ENCODE measurements at regions of chr16 and their contacts with region 1.

Region 1: GRCh38 chr16:29738514-29738913 is 7.3 kb downstream of the C16orf54 start:
- DNase-seq: peak in 7 of 9 donors; percentile 66 to 86 (median 82)
- ATAC-seq: peak; percentile 90
- H3K4me3 ChIP-seq: peak overlapping the region; percentile 18
- H3K4me3 Mint-ChIP-seq: peak overlapping the region; percentile 50 to 96 (median 64)
- H3K27ac ChIP-seq: peak overlapping the region; percentile 80
- H3K27ac Mint-ChIP-seq: peak overlapping the region; percentile 82 to 99 (median 91)
- H3K4me1 ChIP-seq: peaks cover 69 to 70% of the 10 kb centered on the region in 2 donors
- H3K4me1 Mint-ChIP-seq: peaks cover 63 to 91% (median 84%) of the 10 kb centered on the region in 7 donors
- H3K27me3 ChIP-seq: no peaks in the 10 kb centered on the region
- H3K27me3 Mint-ChIP-seq: no peaks in the 10 kb centered on the region

Region 2: DNA sequence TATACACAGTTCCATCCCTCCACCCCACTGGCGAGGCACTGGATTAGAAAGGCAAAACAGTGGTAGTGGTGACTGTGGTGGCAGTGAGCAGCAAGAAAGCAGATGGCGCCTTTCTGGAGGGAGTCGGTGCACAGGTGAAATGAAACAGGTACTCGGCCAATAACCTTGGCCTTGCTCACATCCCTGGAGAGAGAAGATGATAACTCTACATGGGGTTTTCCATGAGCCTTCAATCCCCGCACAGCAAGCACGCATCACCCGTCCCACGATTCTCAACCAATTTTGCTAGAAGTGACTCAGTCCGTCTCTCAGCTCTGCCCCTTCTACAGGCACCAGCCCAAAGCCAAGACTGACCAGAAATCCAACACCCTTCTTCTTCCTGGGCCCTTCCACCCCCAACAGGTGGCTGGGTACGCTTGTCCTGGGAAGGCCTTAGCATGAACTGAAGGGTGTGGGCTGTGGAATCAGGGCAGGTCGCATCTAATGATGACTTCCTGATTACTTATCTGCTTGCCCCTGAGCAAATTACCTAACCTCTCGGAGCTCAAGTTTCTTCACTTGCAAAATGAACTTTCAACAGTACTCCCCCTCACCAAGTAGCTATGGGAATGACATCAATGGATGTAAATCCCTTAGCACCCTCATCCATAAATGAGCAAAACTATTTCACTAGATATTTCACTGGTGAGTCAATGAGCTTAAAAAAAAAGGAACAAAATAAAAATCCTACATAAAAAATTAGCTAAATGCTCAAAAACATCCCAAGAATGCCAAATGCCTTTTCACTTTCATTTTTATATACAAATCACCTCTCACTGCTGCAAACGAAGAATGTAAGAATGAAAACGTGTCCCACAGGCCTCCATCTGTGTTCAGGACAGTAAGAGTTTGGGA is 1544.7 kb before region 1 on chr16:
- CTCF ChIA-PET with region 1: no interaction called
- POLR2A ChIA-PET with region 1: no interaction called
- intact Hi-C with region 1: no loop called
- DNase-seq: peak in 2 of 9 donors; percentile 45 to 55
- ATAC-seq: peak; percentile 24
- H3K4me3 ChIP-seq: peak overlapping the region; percentile 39
- H3K4me3 Mint-ChIP-seq: peak overlapping the region; percentile 73 to 87 (median 86)
- H3K27ac ChIP-seq: peak overlapping the region; percentile 77
- H3K27ac Mint-ChIP-seq: peak overlapping the region; percentile 86 to 99 (median 95)
- H3K4me1 ChIP-seq: peaks cover 43 to 75% of the 10 kb centered on the region in 2 donors
- H3K4me1 Mint-ChIP-seq: peaks cover 65 to 94% (median 84%) of the 10 kb centered on the region in 7 donors
- H3K27me3 ChIP-seq: no peaks in the 10 kb centered on the region
- H3K27me3 Mint-ChIP-seq: no peaks in the 10 kb centered on the region

Region 3: DNA sequence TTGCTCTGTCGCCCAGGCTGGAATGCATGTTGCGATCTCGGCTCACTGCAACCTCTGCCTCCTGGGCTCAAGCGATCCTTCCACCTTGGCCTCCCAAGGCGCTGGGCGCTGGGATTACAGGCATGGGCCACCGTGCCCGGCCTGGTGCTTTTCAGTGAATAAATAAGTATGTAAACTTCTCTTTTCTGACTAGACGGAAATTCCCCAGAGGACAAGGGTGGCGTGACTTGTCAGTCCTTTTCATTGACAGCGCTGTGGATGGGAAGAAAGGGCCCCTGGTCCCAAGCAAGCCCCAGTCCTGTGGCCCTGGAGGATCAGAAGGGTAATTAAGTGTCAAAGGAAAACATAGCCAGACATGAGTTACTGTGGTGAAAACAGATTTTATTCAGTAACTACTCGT is 85.0 kb before region 1 on chr16:
- CTCF ChIA-PET with region 1: no interaction called
- POLR2A ChIA-PET with region 1: no interaction called
- intact Hi-C with region 1: no loop called
- DNase-seq: no peak
- ATAC-seq: peak; percentile 69
- H3K4me3 ChIP-seq: no peak overlapping the region
- H3K4me3 Mint-ChIP-seq: no peak overlapping the region
- H3K27ac ChIP-seq: no peak overlapping the region
- H3K27ac Mint-ChIP-seq: no peak overlapping the region
- H3K4me1 ChIP-seq: no peaks in the 10 kb centered on the region
- H3K4me1 Mint-ChIP-seq: peaks cover 4 to 24% (median 13%) of the 10 kb centered on the region in 7 donors
- H3K27me3 ChIP-seq: no peaks in the 10 kb centered on the region
- H3K27me3 Mint-ChIP-seq: no peaks in the 10 kb centered on the region

Region 4: DNA sequence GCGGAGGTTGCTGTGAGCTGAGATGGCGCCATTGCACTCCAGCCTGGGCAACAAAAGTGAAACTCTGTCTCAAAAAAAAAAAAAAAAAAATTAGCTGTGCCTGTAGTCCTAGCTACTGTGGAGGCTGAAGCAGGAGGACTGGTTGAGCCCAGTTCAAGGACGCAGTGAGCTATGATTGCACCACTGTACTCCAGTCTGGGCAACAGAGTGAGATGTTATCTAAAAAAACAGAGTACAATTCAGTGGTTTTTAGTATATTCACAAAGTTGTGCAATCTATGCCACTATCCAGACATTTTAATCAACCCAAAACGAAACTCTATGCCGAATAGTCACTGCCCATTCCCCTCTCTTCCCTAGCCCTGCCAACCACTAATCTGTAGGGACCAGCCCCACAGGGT is 17.8 kb before region 1 on chr16:
- CTCF ChIA-PET with region 1: interaction called, 7 read pairs
- POLR2A ChIA-PET with region 1: interaction called, 5 read pairs
- intact Hi-C with region 1: loop called in 1 of 2 experiments (anchors 1 kb)
- DNase-seq: no peak
- ATAC-seq: no peak
- H3K4me3 ChIP-seq: no peak overlapping the region
- H3K4me3 Mint-ChIP-seq: peak overlapping the region in 1 of 10 donors; percentile 49
- H3K27ac ChIP-seq: no peak overlapping the region
- H3K27ac Mint-ChIP-seq: no peak overlapping the region
- H3K4me1 ChIP-seq: no peaks in the 10 kb centered on the region
- H3K4me1 Mint-ChIP-seq: peaks cover 11 to 24% (median 20%) of the 10 kb centered on the region in 7 donors
- H3K27me3 ChIP-seq: no peaks in the 10 kb centered on the region
- H3K27me3 Mint-ChIP-seq: peaks cover 0 to 6% (median 0%) of the 10 kb centered on the region in 5 donors

Region 5: GRCh38 chr16:29757950-29758466 is 19.5 kb after region 1 on chr16:
- CTCF ChIA-PET with region 1: interaction called, 6 read pairs
- POLR2A ChIA-PET with region 1: interaction called, 22 read pairs
- intact Hi-C with region 1: loop called in 1 of 2 experiments (anchors 2 kb)
- DNase-seq: no peak
- ATAC-seq: no peak
- H3K4me3 ChIP-seq: no peak overlapping the region
- H3K4me3 Mint-ChIP-seq: peak overlapping the region in 2 of 10 donors; percentile 19 to 36
- H3K27ac ChIP-seq: peak overlapping the region; percentile 61
- H3K27ac Mint-ChIP-seq: peak overlapping the region in 8 of 9 donors; percentile 37 to 96 (median 84)
- H3K4me1 ChIP-seq: peaks cover 8 to 33% of the 10 kb centered on the region in 2 donors
- H3K4me1 Mint-ChIP-seq: peaks cover 14 to 58% (median 40%) of the 10 kb centered on the region in 7 donors
- H3K27me3 ChIP-seq: no peaks in the 10 kb centered on the region
- H3K27me3 Mint-ChIP-seq: peaks cover 0 to 6% (median 0%) of the 10 kb centered on the region in 5 donors

Region 6: DNA sequence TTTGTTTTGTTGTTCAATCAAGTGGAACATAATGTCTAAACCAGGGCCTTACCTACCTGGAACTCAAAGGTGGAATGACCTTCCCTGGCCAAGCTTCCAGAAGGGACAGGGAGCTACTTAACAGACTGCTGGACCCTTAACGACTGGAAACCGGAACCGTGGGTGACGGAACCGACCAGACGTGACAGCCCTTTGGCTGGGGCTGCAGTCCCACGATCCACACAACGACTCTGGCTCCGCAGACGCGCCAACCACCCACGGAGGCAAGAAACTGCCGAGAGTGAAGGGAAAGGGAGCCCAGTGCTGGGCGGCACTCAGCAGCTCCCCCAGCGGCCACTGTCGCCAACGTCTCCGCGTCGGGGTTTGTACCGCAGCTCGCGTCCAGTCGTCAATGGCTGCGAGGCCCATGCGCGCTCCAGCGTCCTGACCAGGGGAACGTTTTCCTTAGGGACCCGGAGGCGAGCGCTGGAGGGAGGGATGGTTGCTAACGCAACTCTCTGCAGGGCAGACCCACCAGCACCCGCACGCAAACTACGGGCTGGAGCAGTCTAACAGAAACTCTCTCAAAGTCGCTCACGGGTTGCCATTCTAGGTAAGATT is 46.5 kb after region 1 on chr16:
- CTCF ChIA-PET with region 1: interaction called, 25 read pairs
- POLR2A ChIA-PET with region 1: interaction called, 79 read pairs
- intact Hi-C with region 1: loop called (anchors 1 to 2 kb)
- DNase-seq: peak; percentile 59 to 77 (median 68)
- ATAC-seq: peak; percentile 95
- H3K4me3 ChIP-seq: peak overlapping the region; percentile 36
- H3K4me3 Mint-ChIP-seq: peak overlapping the region; percentile 56 to 80 (median 72)
- H3K27ac ChIP-seq: peak overlapping the region; percentile 44
- H3K27ac Mint-ChIP-seq: peak overlapping the region; percentile 58 to 95 (median 80)
- H3K4me1 ChIP-seq: peaks cover 12 to 15% of the 10 kb centered on the region in 2 donors
- H3K4me1 Mint-ChIP-seq: peaks cover 12 to 44% (median 28%) of the 10 kb centered on the region in 7 donors
- H3K27me3 ChIP-seq: no peaks in the 10 kb centered on the region
- H3K27me3 Mint-ChIP-seq: peaks cover 0 to under 1% (median 0%) of the 10 kb centered on the region in 5 donors

Region 7: GRCh38 chr16:29815793-29816693 is 77.5 kb after region 1 on chr16 and contains the start of gene PAGR1:
- CTCF ChIA-PET with region 1: interaction called, 3 read pairs
- POLR2A ChIA-PET with region 1: interaction called, 9 read pairs
- intact Hi-C with region 1: loop called in 1 of 2 experiments (anchors 1 kb)
- DNase-seq: peak; percentile 92 to 99 (median 99)
- ATAC-seq: peak; percentile 87
- H3K4me3 ChIP-seq: peak within 1 kb of the TSS; percentile 99
- H3K4me3 Mint-ChIP-seq: peak within 1 kb of the TSS; percentile 85 to 100 (median 96)
- H3K27ac ChIP-seq: peak within 1 kb of the TSS; percentile 92
- H3K27ac Mint-ChIP-seq: peak within 1 kb of the TSS; percentile 95 to 99 (median 99)
- H3K4me1 ChIP-seq: peaks cover 29 to 41% of the 10 kb centered on the region in 2 donors
- H3K4me1 Mint-ChIP-seq: peaks cover 40 to 75% (median 59%) of the 10 kb centered on the region in 7 donors
- H3K27me3 ChIP-seq: no peaks in the 10 kb centered on the region
- H3K27me3 Mint-ChIP-seq: peaks cover 0 to 22% (median 0%) of the 10 kb centered on the region in 5 donors
- total RNA-seq, gene PAGR1: 17.5 to 42.0 (median 25.7) TPM

Region 8: GRCh38 chr16:31344712-31345111 is 1606.2 kb after region 1 on chr16:
- CTCF ChIA-PET with region 1: no interaction called
- POLR2A ChIA-PET with region 1: no interaction called
- intact Hi-C with region 1: no loop called
- DNase-seq: peak in 1 of 9 donors; percentile 6
- ATAC-seq: peak; percentile 45
- H3K4me3 ChIP-seq: no peak overlapping the region
- H3K4me3 Mint-ChIP-seq: peak overlapping the region in 1 of 10 donors; percentile 4
- H3K27ac ChIP-seq: no peak overlapping the region
- H3K27ac Mint-ChIP-seq: no peak overlapping the region
- H3K4me1 ChIP-seq: peaks cover 0 to 8% of the 10 kb centered on the region in 2 donors
- H3K4me1 Mint-ChIP-seq: peaks cover 0 to 40% (median 0%) of the 10 kb centered on the region in 7 donors
- H3K27me3 ChIP-seq: no peaks in the 10 kb centered on the region
- H3K27me3 Mint-ChIP-seq: peaks cover 0 to 23% (median 0%) of the 10 kb centered on the region in 5 donors